PC-9 (cell line): ENCODE measurements at regions of chr4 and their contacts with region 1.

Region 1: GRCh38 chr4:62285026-62285425 is 1084.9 kb downstream of the ADGRL3 start:
- DNase-seq: no peak
- H3K4me3 ChIP-seq: no peak overlapping the region
- H3K27ac ChIP-seq: no peak overlapping the region
- H3K4me1 ChIP-seq: no peaks in the 10 kb centered on the region
- H3K27me3 ChIP-seq: no peaks in the 10 kb centered on the region
- CTCF ChIP-seq: no peak

Region 2: DNA sequence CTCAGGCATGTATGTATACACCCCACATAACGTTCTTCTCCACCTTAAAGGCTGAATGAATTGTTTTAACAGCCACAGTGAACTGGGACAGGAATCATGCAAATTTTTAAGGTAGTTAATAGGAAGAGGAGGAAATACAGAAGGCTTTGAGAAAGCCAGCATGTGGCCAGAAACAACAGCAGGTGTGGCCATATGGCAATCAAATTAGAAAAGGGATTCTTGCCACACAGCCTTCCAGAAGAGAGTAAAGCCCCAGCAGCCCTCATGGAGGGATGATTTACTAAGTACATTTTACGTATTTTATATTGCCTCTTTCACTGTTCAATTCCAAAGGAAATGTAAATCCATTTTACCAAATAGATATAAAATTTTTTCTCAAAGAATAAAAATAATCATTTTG is 292.7 kb before region 1 on chr4:
- CTCF ChIA-PET with region 1: no interaction called
- POLR2A ChIA-PET with region 1: no interaction called
- intact Hi-C with region 1: no loop called
- DNase-seq: no peak
- H3K4me3 ChIP-seq: no peak overlapping the region
- H3K27ac ChIP-seq: no peak overlapping the region
- H3K4me1 ChIP-seq: no peaks in the 10 kb centered on the region
- H3K27me3 ChIP-seq: no peaks in the 10 kb centered on the region
- CTCF ChIP-seq: no peak

Region 3: GRCh38 chr4:62119195-62119594 is 165.8 kb before region 1 on chr4:
- CTCF ChIA-PET with region 1: no interaction called
- POLR2A ChIA-PET with region 1: no interaction called
- intact Hi-C with region 1: no loop called
- DNase-seq: no peak
- H3K4me3 ChIP-seq: no peak overlapping the region
- H3K27ac ChIP-seq: no peak overlapping the region
- H3K4me1 ChIP-seq: no peaks in the 10 kb centered on the region
- H3K27me3 ChIP-seq: no peaks in the 10 kb centered on the region
- CTCF ChIP-seq: no peak

Region 4: DNA sequence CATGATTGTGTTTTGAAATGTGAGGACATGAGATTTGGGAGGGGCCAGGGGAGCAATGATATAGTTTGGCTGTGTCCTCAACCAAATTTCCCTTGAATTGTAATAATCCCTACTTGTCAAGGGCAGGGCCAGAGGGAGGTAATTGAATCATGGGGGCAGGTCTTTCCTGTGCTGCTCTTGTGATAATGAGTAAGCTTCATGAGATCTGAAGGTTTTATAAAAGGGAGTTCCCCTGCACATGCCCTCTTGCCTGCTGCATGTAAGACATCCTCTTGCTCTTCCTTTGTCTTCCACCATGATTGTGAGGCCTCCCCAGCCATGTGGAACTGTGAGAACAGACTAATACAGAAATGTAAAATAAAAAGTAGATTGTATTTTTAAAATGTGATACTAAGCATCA is 210.0 kb after region 1 on chr4:
- CTCF ChIA-PET with region 1: no interaction called
- POLR2A ChIA-PET with region 1: interaction called, 11 read pairs
- intact Hi-C with region 1: no loop called
- DNase-seq: no peak
- H3K4me3 ChIP-seq: no peak overlapping the region
- H3K27ac ChIP-seq: no peak overlapping the region
- H3K4me1 ChIP-seq: no peaks in the 10 kb centered on the region
- H3K27me3 ChIP-seq: no peaks in the 10 kb centered on the region
- CTCF ChIP-seq: no peak